Calu3 (cell line): ENCODE measurements at regions of chr7 and their contacts with region 1.

Region 1: GRCh38 chr7:46569133-46569465 is 648.0 kb upstream of the IGFBP3 start:
- DNase-seq: peak; percentile 86
- H3K4me3 Mint-ChIP-seq: peak overlapping the region; percentile 56
- H3K27ac Mint-ChIP-seq: peak overlapping the region; percentile 75
- H3K4me1 Mint-ChIP-seq: peaks cover 94% of the 10 kb centered on the region
- H3K27me3 Mint-ChIP-seq: no peaks in the 10 kb centered on the region
- CTCF ChIP-seq: no peak

Region 2: GRCh38 chr7:46215987-46216567 is 353.0 kb before region 1 on chr7:
- CTCF ChIA-PET with region 1: no interaction called
- intact Hi-C with region 1: loop called (anchors 10 kb)
- DNase-seq: peak; percentile 94
- H3K4me3 Mint-ChIP-seq: peak overlapping the region; percentile 2
- H3K27ac Mint-ChIP-seq: peak overlapping the region; percentile 97
- H3K4me1 Mint-ChIP-seq: peaks cover 84% of the 10 kb centered on the region
- H3K27me3 Mint-ChIP-seq: no peaks in the 10 kb centered on the region
- CTCF ChIP-seq: no peak

Region 3: DNA sequence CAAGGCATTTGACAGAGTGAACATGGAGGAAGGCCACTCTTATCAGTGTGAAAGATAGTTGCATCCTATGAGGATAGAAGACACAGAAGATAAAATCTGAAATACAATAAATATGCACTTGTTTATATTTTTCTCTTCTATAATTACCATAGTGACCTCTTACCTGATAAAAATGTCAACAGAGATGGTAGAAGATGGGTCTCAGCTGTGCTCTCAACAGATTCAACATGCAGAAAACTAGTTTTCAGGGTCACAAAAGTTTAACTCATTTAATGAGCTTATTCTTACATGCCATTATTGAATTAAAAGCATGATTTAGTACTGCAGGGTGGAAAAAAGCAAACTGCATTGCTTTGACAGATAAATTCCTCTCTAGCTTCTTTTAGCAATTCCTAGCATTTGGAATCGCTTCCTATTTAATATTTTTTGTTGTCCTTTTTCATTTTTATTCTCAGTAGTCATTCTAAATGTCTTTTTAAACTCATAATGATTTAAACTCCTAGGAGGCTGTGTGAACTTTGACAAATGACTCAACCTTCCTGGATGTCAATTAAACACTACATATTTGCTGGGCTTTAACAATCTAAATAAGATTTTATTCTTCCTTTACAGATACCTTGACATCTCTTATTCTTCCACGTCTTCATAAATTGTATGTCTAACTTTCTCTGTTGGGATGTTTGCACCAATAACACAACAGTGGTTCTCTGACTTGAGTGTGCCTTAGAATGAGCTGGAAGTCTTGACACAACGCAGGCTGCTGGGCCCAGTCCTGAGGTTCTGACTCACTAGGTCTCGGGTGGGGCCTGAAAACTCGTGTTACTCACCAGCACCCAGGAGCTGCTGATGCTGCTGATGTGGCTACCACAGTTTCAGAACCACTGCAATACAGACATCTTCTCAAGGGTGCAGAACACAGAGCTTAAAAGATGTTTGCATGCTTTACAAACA is 82.6 kb before region 1 on chr7:
- CTCF ChIA-PET with region 1: interaction called, 8 read pairs
- intact Hi-C with region 1: loop called (anchors 5 kb)
- DNase-seq: peak; percentile 60
- H3K4me3 Mint-ChIP-seq: peak overlapping the region; percentile 19
- H3K27ac Mint-ChIP-seq: peak overlapping the region; percentile 83
- H3K4me1 Mint-ChIP-seq: peaks cover 50% of the 10 kb centered on the region
- H3K27me3 Mint-ChIP-seq: no peaks in the 10 kb centered on the region
- CTCF ChIP-seq: no peak

Region 4: GRCh38 chr7:46583656-46584055 is 14.6 kb after region 1 on chr7:
- CTCF ChIA-PET with region 1: no interaction called
- intact Hi-C with region 1: no loop called
- DNase-seq: no peak
- H3K4me3 Mint-ChIP-seq: no peak overlapping the region
- H3K27ac Mint-ChIP-seq: no peak overlapping the region
- H3K4me1 Mint-ChIP-seq: no peaks in the 10 kb centered on the region
- H3K27me3 Mint-ChIP-seq: no peaks in the 10 kb centered on the region
- CTCF ChIP-seq: no peak

Region 5: GRCh38 chr7:46695051-46695707 is 126.1 kb after region 1 on chr7:
- CTCF ChIA-PET with region 1: interaction called, 4 read pairs
- intact Hi-C with region 1: loop called (anchors 1 kb)
- DNase-seq: peak; percentile 86
- H3K4me3 Mint-ChIP-seq: no peak overlapping the region
- H3K27ac Mint-ChIP-seq: peak overlapping the region; percentile 91
- H3K4me1 Mint-ChIP-seq: peaks cover 47% of the 10 kb centered on the region
- H3K27me3 Mint-ChIP-seq: no peaks in the 10 kb centered on the region
- CTCF ChIP-seq: peak; percentile 16

Region 6: DNA sequence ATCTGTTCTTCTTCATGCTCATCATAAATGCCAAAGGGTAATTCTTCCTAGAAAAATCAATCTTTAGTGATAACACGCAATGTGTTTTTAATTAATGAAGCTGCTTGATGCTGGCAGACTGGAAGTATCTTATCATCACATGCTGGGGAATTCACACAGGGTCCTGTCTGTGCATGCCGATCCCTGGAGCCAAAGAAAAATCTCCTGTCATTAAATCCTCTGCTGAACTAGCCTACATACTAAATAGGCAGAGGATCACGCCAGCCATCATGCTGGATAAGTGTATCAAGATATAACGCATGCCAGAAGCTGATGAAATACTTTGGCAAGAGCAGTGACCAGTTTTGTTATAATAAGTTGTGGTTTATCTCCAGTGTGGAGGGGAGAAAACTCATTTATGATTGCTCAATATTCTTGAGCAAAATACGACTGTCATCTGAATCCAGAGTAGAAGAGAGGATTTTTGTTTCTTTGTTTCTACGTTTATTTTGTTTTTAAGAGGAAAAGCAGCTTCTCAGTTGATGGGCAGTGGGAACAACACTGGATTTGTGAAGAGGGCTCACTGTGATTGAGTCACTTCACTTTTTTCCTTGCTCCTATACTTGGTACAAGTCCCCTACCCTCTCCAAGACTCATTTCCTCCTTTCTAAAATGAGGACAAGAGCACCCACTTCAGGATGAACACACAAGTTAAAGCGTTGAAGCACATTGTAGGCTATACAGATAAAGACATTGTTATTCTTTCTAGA is 363.8 kb after region 1 on chr7:
- CTCF ChIA-PET with region 1: no interaction called
- intact Hi-C with region 1: loop called (anchors 5 kb)
- DNase-seq: peak; percentile 41
- H3K4me3 Mint-ChIP-seq: peak overlapping the region; percentile 18
- H3K27ac Mint-ChIP-seq: peak overlapping the region; percentile 99
- H3K4me1 Mint-ChIP-seq: peaks cover 59% of the 10 kb centered on the region
- H3K27me3 Mint-ChIP-seq: no peaks in the 10 kb centered on the region
- CTCF ChIP-seq: no peak